GM10248 (cell line): ENCODE measurements at regions of chr13 and their contacts with region 1.

Region 1: DNA sequence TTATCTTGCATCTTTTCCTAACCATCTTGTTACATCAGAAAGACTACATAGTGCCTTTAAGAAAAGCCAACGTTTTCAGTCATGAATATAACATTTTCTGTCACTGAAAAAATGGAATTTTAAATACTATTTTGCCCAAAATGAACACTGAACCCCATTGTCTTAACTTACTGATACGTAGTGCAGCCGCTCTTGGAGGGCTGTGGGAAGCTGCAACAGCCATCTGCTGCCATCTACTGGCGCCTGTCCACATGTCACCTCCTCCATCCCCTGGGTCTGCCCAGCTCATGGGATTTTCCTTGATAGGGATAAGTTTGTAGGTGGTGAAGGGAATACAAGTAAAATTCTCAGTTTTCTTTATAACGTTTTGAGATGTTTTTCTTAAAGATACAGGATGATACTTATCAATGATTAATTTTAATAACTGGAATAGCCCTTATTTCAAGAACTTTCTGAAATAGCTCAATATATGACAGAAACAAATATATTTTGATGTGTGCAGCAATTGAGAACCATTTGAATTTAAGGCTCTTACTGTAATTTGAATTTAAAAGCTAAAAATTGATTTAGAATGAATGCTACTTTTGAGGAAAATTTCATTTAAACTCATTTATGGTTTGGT is 73.7 kb downstream of the GGACT start:
- DNase-seq: peak; percentile 83
- CTCF ChIP-seq: peak; percentile 90

Region 2: GRCh38 chr13:99898421-99898820 is 616.5 kb before region 1 on chr13:
- CTCF ChIA-PET with region 1: interaction called, 12 read pairs
- POLR2A ChIA-PET with region 1: no interaction called
- DNase-seq: no peak
- CTCF ChIP-seq: no peak

Region 3: GRCh38 chr13:99916366-99917103 is 598.4 kb before region 1 on chr13:
- CTCF ChIA-PET with region 1: interaction called, 65 read pairs
- POLR2A ChIA-PET with region 1: no interaction called
- DNase-seq: peak; percentile 80
- CTCF ChIP-seq: peak; percentile 85

Region 4: DNA sequence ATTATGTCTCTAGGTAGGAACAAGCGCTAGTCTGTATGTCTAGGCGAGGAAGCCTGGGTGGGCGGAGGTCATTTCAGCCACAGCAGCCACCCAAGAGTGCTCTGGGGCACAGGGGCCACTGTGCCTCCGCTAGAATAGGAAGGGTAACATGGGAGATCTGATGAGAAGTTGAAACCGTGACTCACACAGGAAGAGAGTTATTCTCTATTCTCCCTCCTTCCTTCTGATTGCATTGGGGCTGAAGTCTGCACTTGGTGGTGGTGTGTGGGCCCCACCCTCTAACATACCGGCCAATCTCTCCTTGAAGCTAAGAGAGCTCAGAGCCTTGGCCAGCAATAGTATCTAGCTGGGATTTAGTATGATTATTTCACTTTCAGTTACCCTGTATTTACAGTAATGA is 94.0 kb after region 1 on chr13:
- CTCF ChIA-PET with region 1: no interaction called
- POLR2A ChIA-PET with region 1: no interaction called
- DNase-seq: peak; percentile 81
- CTCF ChIP-seq: no peak